ENCODE measurements at regions of chr18 and their contacts with region 1.

Region 1: DNA sequence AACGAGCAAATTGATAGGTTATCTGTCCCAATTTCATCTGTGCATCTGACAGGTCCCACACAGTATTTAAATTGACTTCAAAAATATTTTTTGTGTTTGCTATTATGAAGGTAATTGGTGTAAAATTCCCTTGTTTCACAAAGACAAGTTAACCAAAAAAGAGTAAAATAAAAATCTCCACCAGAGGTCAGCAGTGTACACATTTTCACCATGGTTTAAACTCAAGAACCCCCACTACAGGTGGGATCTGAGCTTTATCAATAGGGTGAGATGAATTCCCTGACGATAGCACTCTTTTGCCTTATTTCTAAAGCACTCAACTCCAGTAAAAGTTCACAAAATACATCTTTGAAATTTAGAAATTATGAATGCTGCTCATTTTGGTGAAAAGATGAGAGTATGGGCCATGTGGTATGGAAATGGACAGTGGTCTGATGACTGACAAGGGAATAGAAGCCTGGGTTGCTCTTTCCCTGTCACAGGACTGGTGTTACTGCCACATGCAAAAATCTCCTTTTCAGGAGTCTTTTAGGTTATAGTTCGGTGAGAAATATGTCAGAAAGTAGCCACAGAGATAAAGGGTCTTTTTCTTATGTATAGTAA is 68.0 kb downstream of the SERPINB8 start:
- DNase-seq: no peak
- H3K4me3 Mint-ChIP-seq: no peak overlapping the region
- H3K27ac Mint-ChIP-seq: no peak overlapping the region
- H3K4me1 Mint-ChIP-seq: no peaks in the 10 kb centered on the region
- H3K27me3 Mint-ChIP-seq: no peaks in the 10 kb centered on the region
- CTCF ChIP-seq: peak; percentile 61

Region 2: DNA sequence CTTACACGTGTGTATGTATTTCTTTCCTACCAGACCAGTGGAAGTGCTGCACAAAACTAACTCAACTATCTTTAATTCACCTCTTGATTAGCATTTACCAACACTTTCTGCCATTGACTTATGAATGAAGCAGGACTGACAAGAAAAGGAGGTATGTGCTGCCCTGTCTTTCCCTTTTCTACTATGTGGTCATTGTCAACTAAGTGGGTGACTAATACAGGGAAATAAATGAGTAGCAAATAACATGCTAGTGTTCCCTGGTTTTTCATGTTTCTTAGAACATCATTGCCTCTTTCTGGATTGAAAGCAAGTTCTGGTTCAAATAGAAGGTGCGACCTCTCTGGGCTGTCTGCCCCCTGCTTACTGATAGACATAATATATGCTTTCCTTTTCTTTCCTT is 53.0 kb after region 1 on chr18:
- CTCF ChIA-PET with region 1: no interaction called
- intact Hi-C with region 1: loop called (anchors 5 kb)
- DNase-seq: no peak
- H3K4me3 Mint-ChIP-seq: no peak overlapping the region
- H3K27ac Mint-ChIP-seq: no peak overlapping the region
- H3K4me1 Mint-ChIP-seq: peaks cover 10% of the 10 kb centered on the region
- H3K27me3 Mint-ChIP-seq: no peaks in the 10 kb centered on the region
- CTCF ChIP-seq: no peak